GM10248 (cell line): ENCODE measurements at regions of chr3 and their contacts with region 1.

Region 1: GRCh38 chr3:127544192-127544802 is 46.2 kb downstream of the TPRA1 start:
- DNase-seq: peak; percentile 90
- CTCF ChIP-seq: peak; percentile 88

Region 2: GRCh38 chr3:126522363-126522788 is 1021.9 kb before region 1 on chr3:
- CTCF ChIA-PET with region 1: interaction called, 42 read pairs
- POLR2A ChIA-PET with region 1: no interaction called
- DNase-seq: peak; percentile 75
- CTCF ChIP-seq: peak; percentile 90

Region 3: DNA sequence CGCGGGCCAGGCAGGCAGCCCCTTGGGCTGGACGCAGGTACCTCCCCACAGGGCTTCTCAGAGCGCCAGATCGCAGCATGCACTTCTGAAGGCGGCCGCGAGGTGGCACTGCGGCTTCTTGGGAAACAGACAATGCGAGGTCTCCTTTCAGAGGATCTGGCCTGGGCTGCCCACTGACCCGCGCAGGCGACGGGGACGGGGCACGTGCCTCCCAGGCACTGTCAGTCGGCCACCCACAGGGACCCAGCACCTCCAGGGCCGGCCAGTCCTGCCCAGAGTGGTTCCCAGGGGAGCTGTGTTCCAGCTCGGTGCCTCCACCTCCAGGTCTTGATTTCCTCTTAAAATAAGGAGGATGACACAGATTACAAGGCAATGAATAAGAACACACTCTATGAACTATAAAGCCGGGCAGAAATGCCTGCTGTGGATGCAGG is 865.0 kb before region 1 on chr3:
- CTCF ChIA-PET with region 1: interaction called, 27 read pairs
- POLR2A ChIA-PET with region 1: no interaction called
- DNase-seq: peak; percentile 85
- CTCF ChIP-seq: peak; percentile 96

Region 4: DNA sequence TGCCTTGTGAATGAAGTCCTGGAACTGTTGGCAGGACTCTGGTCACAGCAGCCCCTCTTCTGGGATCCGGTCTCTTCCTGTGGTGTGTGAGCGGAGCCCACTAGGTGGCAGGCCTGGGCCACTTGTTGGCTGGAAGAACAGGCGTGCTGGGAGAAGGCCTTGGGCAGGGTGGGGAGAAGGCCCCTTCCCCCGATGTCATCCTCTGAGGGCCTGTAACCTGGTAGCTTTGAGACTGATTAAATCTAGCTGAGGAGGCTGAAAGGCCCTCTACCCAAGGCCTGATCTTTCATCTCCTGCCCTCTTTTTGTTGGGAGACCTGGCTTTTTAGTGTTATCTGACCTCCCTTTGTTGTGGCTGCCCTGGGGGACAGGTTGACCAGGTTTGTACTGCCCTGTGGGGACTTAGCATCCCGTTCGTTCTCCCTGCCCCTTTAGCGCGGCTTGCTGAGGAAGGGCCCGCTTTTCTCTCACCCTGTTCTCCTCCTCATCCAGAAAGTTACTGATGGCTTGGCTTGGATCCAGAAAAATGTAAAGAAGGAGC is 791.9 kb before region 1 on chr3:
- CTCF ChIA-PET with region 1: interaction called, 24 read pairs
- POLR2A ChIA-PET with region 1: no interaction called
- DNase-seq: peak; percentile 82
- CTCF ChIP-seq: peak; percentile 95

Region 5: GRCh38 chr3:127374086-127375010 is 169.9 kb before region 1 on chr3:
- CTCF ChIA-PET with region 1: interaction called, 11 read pairs
- POLR2A ChIA-PET with region 1: no interaction called
- DNase-seq: peak; percentile 48
- CTCF ChIP-seq: peak; percentile 44

Region 6: GRCh38 chr3:127556565-127556964 is 12.3 kb after region 1 on chr3:
- CTCF ChIA-PET with region 1: interaction called, 10 read pairs
- POLR2A ChIA-PET with region 1: no interaction called
- DNase-seq: no peak
- CTCF ChIP-seq: no peak

Region 7: DNA sequence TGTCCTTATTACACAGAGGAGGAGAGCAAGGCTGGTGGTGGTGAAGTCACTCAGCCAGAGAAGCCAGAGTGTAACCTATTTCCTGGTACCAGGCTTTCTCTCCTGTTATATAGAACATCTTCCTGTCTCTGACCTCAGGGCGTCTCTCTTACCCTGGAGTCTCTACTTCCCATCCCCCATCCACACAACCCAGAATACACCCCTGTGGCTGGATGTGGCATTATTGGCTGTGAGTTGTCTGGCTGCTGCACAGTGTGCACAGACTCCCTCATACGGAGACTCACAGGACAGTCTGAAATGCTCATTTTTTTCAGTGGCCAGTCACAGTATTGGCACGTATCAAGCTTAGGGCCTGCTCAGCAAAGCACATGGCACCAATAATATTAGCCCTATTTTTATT is 93.2 kb after region 1 on chr3:
- CTCF ChIA-PET with region 1: no interaction called
- POLR2A ChIA-PET with region 1: no interaction called
- DNase-seq: no peak
- CTCF ChIP-seq: no peak